ENCODE measurements at regions of chr1 and their contacts with region 1.

Region 1: GRCh38 chr1:181088079-181089016 is at the start of gene IER5:
- DNase-seq: peak; percentile 96 to 98
- H3K4me3 ChIP-seq: peak within 1 kb of the TSS; percentile 85 to 87 (median 86)
- H3K27ac ChIP-seq: peak within 1 kb of the TSS; percentile 92 to 96
- H3K4me1 ChIP-seq: peaks cover 0 to 9% of the 10 kb centered on the region in 2 donors
- H3K27me3 ChIP-seq: no peaks in the 10 kb centered on the region
- CTCF ChIP-seq: no peak
- POLR2A ChIP-seq: peak; percentile 99
- total RNA-seq, gene IER5: 6.9 to 19.7 (median 18.1) TPM

Region 2: DNA sequence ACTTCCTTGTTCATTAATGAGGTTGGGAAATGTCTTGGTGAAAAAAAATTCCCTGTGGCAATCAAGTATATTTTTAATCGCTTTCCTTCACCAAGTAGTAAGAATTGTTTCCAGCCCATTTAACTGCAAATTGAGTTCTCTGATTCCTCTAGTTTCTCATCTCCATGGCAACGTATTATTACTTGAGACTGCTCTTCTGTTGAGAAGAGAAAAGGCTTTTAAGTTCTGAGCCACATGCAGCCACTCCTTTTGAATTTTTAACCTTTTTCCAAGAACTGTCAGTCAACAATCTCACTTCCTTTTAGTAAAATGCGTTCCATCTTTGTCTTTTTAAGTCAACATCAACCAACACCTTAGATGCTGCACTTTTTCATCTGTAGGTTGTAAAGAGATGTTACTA is 251.3 kb before region 1 on chr1:
- intact Hi-C with region 1: no loop called
- DNase-seq: no peak
- H3K4me3 ChIP-seq: no peak overlapping the region
- H3K27ac ChIP-seq: no peak overlapping the region
- H3K4me1 ChIP-seq: no peaks in the 10 kb centered on the region
- H3K27me3 ChIP-seq: no peaks in the 10 kb centered on the region
- CTCF ChIP-seq: no peak
- POLR2A ChIP-seq: no peak

Region 3: GRCh38 chr1:181033799-181034451 is 54.4 kb before region 1 on chr1 and contains the start of gene MR1:
- intact Hi-C with region 1: loop called (anchors 10 kb)
- DNase-seq: no peak
- H3K4me3 ChIP-seq: peak within 1 kb of the TSS; percentile 45 to 69 (median 54)
- H3K27ac ChIP-seq: peak within 1 kb of the TSS; percentile 97
- H3K4me1 ChIP-seq: peaks cover 8 to 9% of the 10 kb centered on the region in 2 donors
- H3K27me3 ChIP-seq: no peaks in the 10 kb centered on the region
- CTCF ChIP-seq: no peak
- POLR2A ChIP-seq: no peak
- total RNA-seq, gene MR1: 12.8 to 23.4 (median 15.2) TPM

Region 4: GRCh38 chr1:181062836-181063428 is 25.4 kb before region 1 on chr1:
- intact Hi-C with region 1: no loop called
- DNase-seq: no peak
- H3K4me3 ChIP-seq: no peak overlapping the region
- H3K27ac ChIP-seq: no peak overlapping the region
- H3K4me1 ChIP-seq: no peaks in the 10 kb centered on the region
- H3K27me3 ChIP-seq: no peaks in the 10 kb centered on the region
- CTCF ChIP-seq: no peak
- POLR2A ChIP-seq: no peak

Region 5: DNA sequence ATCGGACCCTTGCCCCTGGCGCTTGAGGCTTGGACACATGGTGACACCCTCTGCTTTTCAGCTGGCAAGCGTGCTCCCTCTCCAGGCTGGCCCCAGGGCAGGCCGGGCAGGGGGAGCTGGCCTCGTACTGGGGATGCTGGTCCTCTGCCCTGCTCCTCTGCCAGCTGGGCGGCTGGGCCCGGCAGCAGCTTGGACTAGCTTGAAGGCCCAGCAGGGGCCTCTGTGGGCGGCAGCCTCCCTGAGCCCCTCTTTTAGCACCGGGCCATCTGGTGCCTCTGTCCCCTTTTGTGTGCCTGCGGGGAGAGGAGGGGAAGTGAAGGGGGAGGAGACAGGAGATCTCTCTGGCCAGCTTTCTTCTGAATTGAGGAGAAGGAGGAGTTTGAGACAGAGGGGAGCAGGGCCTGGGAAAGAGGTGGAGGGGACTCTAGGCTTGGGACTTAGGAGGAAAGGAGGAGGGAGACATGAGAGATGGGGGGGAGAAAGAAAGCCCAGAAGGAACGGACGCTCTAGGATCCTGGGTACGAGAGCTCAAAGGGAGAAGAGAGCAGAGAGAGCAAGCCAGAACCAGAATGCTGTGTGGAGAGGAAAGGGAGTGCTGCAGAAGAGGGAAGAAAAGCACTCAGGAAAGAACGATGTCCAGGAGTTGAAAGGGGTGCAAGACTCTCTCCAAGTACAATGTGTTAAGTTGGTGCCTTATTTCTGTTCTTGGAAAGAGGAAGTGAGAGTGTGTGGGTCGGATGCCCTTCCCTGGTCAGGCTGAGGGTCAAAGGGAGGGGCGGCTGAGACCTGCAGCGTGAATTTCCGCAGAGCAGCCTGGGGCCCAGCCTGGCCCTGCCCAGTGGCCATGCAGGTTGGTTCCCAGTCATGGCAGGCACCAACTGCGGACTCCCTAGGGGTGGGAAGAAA is 40.5 kb after region 1 on chr1:
- intact Hi-C with region 1: no loop called
- DNase-seq: no peak
- H3K4me3 ChIP-seq: no peak overlapping the region
- H3K27ac ChIP-seq: peak overlapping the region in 1 of 2 donors; percentile 55
- H3K4me1 ChIP-seq: peaks cover 3 to 4% of the 10 kb centered on the region in 2 donors
- H3K27me3 ChIP-seq: no peaks in the 10 kb centered on the region
- CTCF ChIP-seq: no peak
- POLR2A ChIP-seq: no peak

Region 6: DNA sequence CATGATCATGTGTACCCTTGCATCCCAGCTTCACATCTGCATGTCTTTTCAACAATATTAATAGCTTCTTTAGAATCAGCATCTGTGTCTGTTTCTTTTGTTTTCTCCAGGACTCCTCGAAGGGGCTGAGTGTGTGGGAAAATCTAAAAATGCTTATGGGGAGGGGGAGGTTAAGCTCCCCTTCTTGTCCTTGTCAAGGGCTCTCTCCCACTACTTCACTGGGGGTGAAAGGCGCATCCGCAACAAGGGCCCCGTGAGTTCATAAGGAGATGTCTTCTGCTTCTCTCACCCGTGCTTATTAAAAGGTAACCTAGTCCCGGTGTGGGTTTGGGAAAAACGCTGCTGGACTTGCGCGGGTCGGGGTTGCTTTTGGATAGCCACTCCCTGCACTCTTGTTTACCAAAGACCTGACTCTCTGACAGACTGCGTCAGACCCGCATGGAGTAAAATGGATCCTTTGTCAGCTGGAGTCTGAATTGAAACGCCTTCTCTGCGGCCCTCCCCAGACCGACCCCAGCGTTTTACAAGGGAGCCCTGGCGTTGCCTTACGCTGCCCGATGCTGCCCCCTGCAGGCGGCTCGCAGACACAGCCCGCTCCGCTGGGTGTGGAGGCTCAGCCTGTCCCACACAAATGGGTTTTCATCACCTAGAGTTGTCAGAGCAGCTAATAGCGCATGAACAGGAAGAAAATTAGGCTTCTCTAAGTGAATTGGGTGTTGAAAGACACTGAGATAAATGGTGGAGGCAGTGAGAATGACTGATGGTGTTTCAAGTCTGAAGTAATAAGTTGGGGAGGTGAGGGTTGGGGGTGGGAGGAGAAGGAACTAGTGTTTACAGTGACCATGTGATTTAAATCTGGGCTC is 54.0 kb after region 1 on chr1:
- intact Hi-C with region 1: loop called (anchors 2 kb)
- DNase-seq: peak; percentile 82 to 87
- H3K4me3 ChIP-seq: peak overlapping the region in 2 of 3 donors; percentile 31 to 60
- H3K27ac ChIP-seq: peak overlapping the region; percentile 69
- H3K4me1 ChIP-seq: no peaks in the 10 kb centered on the region
- H3K27me3 ChIP-seq: no peaks in the 10 kb centered on the region
- CTCF ChIP-seq: peak; percentile 93 to 98 (median 98)
- POLR2A ChIP-seq: no peak

Measured in breast epithelium (tissue), 4 donors.